OCI-LY7 (cell line): ENCODE measurements at regions of chr7 and their contacts with region 1.

Region 1: GRCh38 chr7:31443457-31443856 is 70.4 kb upstream of the ITPRID1 start:
- DNase-seq: peak; percentile 63
- H3K4me3 ChIP-seq: no peak overlapping the region
- H3K27ac ChIP-seq: no peak overlapping the region
- H3K4me1 ChIP-seq: no peaks in the 10 kb centered on the region
- CTCF ChIP-seq: peak; percentile 90

Region 2: DNA sequence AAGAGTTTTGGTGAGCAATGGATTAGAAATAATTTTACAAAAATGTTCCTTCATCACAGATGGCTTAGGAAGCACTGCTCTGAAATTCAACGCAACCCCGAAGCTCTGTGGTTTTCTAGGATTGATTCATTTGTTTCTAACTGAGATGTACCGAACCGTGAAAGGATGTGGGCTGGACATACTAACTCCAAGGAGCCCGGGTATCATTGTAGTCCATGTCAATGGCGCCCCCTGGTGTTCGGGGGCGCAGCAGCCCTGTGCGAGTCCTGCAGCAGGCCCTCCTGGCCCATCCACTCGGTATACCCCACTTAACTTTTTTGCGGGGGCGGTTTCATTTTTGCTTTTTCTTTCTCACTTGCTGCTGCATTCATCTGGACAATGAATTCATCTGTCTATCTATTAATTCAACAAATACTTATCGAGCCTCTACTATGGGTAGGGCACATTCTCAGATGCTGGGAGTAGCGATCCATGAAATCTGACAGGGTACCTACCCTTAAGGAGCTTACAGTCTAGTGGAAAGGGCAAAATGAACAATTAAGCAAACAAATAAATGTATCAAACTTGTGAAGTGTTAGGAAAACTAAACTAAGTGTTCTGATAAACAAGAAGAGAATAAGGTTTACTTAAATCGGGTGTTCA is 45.2 kb after region 1 on chr7:
- CTCF ChIA-PET with region 1: no interaction called
- POLR2A ChIA-PET with region 1: no interaction called
- intact Hi-C with region 1: loop called (anchors 1 kb)
- DNase-seq: peak; percentile 58
- H3K4me3 ChIP-seq: no peak overlapping the region
- H3K27ac ChIP-seq: no peak overlapping the region
- H3K4me1 ChIP-seq: no peaks in the 10 kb centered on the region
- CTCF ChIP-seq: peak; percentile 93

Region 3: GRCh38 chr7:31633894-31634494 is 190.5 kb after region 1 on chr7:
- CTCF ChIA-PET with region 1: no interaction called
- POLR2A ChIA-PET with region 1: no interaction called
- intact Hi-C with region 1: loop called (anchors 10 kb)
- DNase-seq: peak; percentile 20
- H3K4me3 ChIP-seq: no peak overlapping the region
- H3K27ac ChIP-seq: no peak overlapping the region
- H3K4me1 ChIP-seq: no peaks in the 10 kb centered on the region
- CTCF ChIP-seq: peak; percentile 68

Region 4: DNA sequence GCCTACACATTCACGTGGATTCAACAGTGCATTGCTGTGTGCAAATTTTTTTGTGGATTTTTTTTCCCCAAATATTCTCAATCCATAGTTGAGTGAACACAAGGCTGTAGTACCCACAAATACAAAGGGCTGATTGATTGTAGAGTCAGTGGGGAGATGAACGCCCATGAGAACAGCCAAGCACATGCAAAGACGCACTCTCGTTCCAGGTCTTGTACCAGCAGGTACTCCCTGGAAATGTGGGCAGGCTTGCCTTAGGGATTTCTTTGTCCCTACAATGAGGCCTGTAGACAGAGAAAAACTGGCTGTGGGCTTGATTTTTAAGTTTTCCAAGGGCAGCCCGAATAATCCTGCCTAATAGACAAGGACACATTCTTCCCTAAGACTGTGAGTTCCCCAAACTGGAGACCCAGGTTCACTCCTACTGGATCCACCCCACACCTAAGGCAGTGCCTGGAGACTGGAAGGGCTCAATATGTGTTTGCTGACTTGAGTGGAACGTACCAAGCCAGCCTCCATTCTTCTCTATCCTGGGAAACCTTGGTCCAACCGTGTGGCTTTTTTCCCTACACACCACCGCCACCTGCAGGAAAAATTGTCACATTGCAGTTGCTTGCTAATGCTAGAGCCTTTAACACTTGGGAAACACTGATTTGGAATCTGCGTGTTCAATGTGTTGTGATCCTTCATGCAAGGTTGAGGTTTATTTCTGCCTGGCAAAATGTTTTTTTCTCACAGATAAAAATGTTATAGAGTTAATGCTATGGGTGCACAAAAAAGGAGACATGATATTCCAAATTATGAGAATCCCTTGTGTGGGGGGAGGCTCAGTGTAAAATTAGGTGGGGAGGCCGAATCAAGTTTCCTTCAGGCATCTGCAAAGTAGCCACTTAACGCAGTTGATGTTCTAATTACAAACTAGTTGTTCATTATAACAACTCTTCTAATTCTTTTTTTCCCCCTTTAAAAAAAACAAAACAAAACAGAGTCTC is 292.8 kb after region 1 on chr7:
- CTCF ChIA-PET with region 1: no interaction called
- POLR2A ChIA-PET with region 1: no interaction called
- intact Hi-C with region 1: loop called (anchors 1 kb)
- DNase-seq: peak; percentile 30
- H3K4me3 ChIP-seq: no peak overlapping the region
- H3K27ac ChIP-seq: no peak overlapping the region
- H3K4me1 ChIP-seq: no peaks in the 10 kb centered on the region
- CTCF ChIP-seq: peak; percentile 82